AG04449 (cell line): ENCODE measurements at regions of chr15 and their contacts with region 1.

Region 1: GRCh38 chr15:45705510-45706473 is 71.0 kb downstream of the SQOR start:
- DNase-seq: peak; percentile 29
- H3K4me3 ChIP-seq: peak overlapping the region; percentile 52
- CTCF ChIP-seq: peak; percentile 87

Region 2: DNA sequence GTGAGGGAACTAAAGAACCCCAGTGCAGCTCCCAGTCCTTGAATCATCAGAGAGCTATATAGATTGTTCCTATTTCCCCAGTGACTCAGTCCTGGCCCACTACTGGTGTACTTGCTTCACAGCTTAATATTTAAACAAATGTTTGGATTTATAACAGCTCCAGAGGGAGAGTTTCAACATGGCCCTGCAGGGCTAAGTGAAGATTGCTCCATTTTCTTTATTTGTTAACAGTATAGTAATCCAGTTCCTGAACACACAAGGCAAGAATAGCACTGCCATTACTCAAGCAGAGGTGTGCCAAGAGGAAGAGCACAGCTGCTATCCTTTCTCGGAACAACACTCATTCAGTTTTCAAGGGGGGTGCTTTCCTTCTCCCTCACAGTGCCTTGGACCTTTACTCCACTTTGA is 64.4 kb before region 1 on chr15:
- CTCF ChIA-PET with region 1: interaction called, 32 read pairs
- POLR2A ChIA-PET with region 1: no interaction called
- DNase-seq: peak; percentile 89
- H3K4me3 ChIP-seq: no peak overlapping the region
- CTCF ChIP-seq: no peak

Region 3: GRCh38 chr15:45678459-45679178 is 27.2 kb before region 1 on chr15:
- CTCF ChIA-PET with region 1: interaction called, 23 read pairs
- POLR2A ChIA-PET with region 1: no interaction called
- DNase-seq: no peak
- H3K4me3 ChIP-seq: no peak overlapping the region
- CTCF ChIP-seq: no peak

Region 4: GRCh38 chr15:45728641-45729040 is 22.8 kb after region 1 on chr15:
- CTCF ChIA-PET with region 1: interaction called, 19 read pairs
- POLR2A ChIA-PET with region 1: no interaction called
- DNase-seq: no peak
- H3K4me3 ChIP-seq: no peak overlapping the region
- CTCF ChIP-seq: no peak

Region 5: DNA sequence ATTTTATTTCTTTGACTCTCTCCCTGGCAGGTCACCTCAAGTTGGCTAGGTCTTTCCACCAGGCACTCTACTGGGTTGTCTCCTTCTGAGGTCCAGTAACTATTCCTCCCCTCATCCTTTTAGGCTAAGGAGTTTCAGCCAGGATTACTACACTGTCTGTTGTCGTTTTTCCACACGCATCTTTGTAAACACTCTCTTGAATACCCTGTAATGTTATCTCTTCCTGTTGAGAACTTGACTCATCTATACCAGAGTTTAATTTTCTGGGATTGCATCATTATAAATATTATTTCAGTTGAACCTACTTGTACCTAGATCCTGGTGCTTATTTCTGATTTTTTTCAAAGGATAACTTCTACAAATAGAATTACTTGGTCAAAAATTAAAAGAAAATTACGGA is 67.4 kb after region 1 on chr15:
- CTCF ChIA-PET with region 1: no interaction called
- POLR2A ChIA-PET with region 1: no interaction called
- DNase-seq: no peak
- H3K4me3 ChIP-seq: no peak overlapping the region
- CTCF ChIP-seq: no peak